Panc1 (cell line): ENCODE measurements at regions of chr5 and their contacts with region 1.

Region 1: GRCh38 chr5:58871648-58872242 is 288.9 kb downstream of the RAB3C start:
- DNase-seq: no peak
- ATAC-seq: no peak
- H3K4me3 ChIP-seq: no peak overlapping the region
- H3K27ac ChIP-seq: no peak overlapping the region
- H3K4me1 ChIP-seq: no peaks in the 10 kb centered on the region
- H3K27me3 ChIP-seq: no peaks in the 10 kb centered on the region; the same call in 1 of the 2 replicates
- CTCF ChIP-seq: peak; percentile 70; the same call in 1 of the 2 replicates

Region 2: DNA sequence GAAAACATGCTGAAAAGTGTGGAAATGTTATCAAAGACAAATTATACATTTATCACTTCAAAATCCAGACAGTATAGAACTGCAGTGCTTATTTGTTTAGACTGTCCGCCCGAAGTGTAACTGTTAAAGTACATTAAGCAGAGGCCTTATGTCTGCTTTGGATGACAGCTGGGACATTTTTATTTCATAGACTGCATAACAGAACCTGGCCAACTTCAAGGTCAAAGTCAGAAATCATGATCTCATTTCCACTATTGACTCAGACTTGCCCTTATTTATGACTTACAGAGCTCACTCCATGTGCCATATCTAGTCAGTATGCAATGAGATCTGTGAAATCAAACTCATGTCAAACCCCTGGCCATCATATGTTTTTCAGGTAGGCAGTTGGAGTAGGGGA is 201.2 kb before region 1 on chr5:
- CTCF ChIA-PET with region 1: no interaction called
- POLR2A ChIA-PET with region 1: no interaction called
- in situ Hi-C with region 1: no loop called
- intact Hi-C with region 1: no loop called
- DNase-seq: no peak
- ATAC-seq: no peak
- H3K4me3 ChIP-seq: no peak overlapping the region
- H3K27ac ChIP-seq: no peak overlapping the region
- H3K4me1 ChIP-seq: no peaks in the 10 kb centered on the region
- H3K27me3 ChIP-seq: no peaks in the 10 kb centered on the region
- CTCF ChIP-seq: no peak

Region 3: GRCh38 chr5:58738336-58738735 is 133.4 kb before region 1 on chr5:
- CTCF ChIA-PET with region 1: no interaction called
- POLR2A ChIA-PET with region 1: no interaction called
- in situ Hi-C with region 1: no loop called
- intact Hi-C with region 1: no loop called
- DNase-seq: no peak
- ATAC-seq: no peak
- H3K4me3 ChIP-seq: no peak overlapping the region
- H3K27ac ChIP-seq: no peak overlapping the region
- H3K4me1 ChIP-seq: no peaks in the 10 kb centered on the region
- H3K27me3 ChIP-seq: no peaks in the 10 kb centered on the region
- CTCF ChIP-seq: no peak

Region 4: DNA sequence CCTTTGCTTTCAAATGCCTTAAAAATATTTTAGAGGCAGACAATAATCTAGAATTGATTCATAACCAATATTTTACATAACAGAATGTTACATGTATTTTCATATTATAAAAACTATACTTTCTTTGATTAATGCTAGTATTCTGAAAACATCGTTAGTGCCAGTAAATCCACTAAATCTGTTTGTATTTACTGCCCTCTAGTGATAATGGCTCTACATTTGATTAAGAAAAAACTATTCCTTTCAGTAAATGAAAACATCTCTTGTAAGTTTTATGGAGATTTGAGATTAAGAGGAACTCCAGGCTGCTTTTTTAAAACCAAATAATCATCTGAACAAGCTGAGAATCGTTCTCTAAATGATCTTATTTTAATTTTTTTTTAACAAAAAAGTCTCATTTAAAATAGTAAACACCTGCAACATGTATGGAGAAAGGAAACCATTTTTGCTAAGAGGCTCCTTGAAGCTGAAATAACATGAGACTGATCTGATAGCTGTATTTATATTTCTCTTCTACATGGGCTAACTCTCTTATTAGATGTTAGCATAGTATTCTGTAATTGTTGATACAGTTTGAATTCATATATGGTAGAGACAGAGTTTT is 135.8 kb after region 1 on chr5:
- CTCF ChIA-PET with region 1: no interaction called
- POLR2A ChIA-PET with region 1: no interaction called
- in situ Hi-C with region 1: no loop called
- intact Hi-C with region 1: loop called (anchors 5 kb)
- DNase-seq: no peak
- ATAC-seq: no peak
- H3K4me3 ChIP-seq: no peak overlapping the region
- H3K27ac ChIP-seq: no peak overlapping the region
- H3K4me1 ChIP-seq: no peaks in the 10 kb centered on the region
- H3K27me3 ChIP-seq: no peaks in the 10 kb centered on the region; the same call in 1 of the 2 replicates
- CTCF ChIP-seq: peak; percentile 51; the same call in 1 of the 2 replicates